PC-9 (cell line): ENCODE measurements at regions of chr10 and their contacts with region 1.

Region 1: DNA sequence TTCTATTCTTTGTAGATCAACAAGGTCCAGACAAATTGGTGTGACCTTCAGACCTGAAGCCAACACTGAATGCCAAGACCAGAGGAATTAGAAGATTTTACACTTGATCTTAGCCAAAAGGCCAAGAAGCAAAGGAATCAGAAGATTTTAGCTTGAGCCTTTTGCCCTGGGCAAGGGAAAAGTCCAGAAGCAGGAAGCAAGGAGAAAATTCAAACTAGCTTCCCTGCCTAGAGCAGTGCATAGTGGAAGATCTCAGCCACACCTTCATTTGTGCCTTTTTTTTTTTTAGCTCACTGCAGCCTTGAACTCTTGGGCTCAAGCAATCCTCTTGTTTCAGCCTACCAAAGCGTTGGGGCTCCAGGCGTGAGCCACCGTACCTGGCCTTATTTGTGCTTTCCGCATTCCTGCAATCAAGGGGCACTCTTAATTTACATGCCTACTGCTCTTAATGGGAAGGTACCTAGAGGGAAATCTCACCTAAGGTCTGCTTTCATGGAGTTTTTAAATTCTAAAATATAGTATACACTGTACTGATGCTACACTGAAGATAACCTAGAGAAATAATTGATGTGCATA is 8.3 kb upstream of the PIP4K2A start:
- DNase-seq: no peak
- H3K4me3 ChIP-seq: no peak overlapping the region
- H3K27ac ChIP-seq: no peak overlapping the region
- H3K4me1 ChIP-seq: no peaks in the 10 kb centered on the region
- H3K27me3 ChIP-seq: no peaks in the 10 kb centered on the region
- CTCF ChIP-seq: no peak

Region 2: DNA sequence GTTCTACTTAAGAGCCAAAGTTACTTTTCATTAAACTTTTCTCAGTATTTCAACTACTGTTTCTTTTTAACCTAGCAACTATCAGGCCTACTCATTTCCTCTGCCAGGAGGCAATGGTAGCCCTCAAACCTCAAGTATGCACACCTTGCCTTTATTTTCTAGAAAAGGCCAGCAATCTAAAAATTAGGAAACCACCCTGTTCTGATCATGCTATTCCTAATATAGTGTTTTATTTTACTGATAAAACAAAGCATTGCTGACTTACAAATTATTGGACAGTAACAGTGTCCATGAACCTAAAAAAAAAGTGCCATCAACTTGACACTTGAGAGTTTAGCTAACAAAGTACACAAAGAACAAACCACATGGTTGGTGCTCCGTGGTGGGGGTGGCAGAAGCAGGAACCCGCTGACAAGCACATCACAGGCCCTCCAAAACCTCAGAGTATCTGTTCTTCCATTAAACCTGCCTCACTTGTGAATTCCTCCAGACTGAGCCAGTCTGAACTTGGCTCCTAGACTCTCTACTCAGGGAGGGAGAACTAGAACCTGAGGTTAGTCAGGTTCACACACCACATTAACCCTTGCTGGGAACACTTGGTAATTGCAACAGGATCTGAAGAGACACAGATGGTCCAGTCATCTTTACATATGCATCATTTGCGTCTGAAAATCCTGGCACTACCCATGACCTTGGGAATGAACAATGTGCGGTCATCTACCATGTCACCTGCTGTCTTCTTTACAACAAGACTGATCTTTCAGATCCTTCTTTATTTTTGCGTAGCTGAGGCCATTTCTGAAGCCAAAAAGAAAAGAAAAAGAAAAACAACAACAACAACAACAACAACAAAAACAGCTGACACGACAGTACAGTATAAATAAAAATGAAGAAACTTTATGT is 40.2 kb before region 1 on chr10:
- CTCF ChIA-PET with region 1: no interaction called
- POLR2A ChIA-PET with region 1: no interaction called
- intact Hi-C with region 1: no loop called
- DNase-seq: peak; percentile 34 to 55
- H3K4me3 ChIP-seq: peak overlapping the region; percentile 21; the same call in 1 of the 2 replicates
- H3K27ac ChIP-seq: peak overlapping the region; percentile 78
- H3K4me1 ChIP-seq: peaks cover 49% of the 10 kb centered on the region
- H3K27me3 ChIP-seq: no peaks in the 10 kb centered on the region
- CTCF ChIP-seq: no peak

Region 3: GRCh38 chr10:22962817-22963216 is 240.1 kb after region 1 on chr10:
- CTCF ChIA-PET with region 1: no interaction called
- POLR2A ChIA-PET with region 1: interaction called, 10 read pairs
- intact Hi-C with region 1: no loop called
- DNase-seq: no peak
- H3K4me3 ChIP-seq: no peak overlapping the region
- H3K27ac ChIP-seq: no peak overlapping the region
- H3K4me1 ChIP-seq: no peaks in the 10 kb centered on the region
- H3K27me3 ChIP-seq: no peaks in the 10 kb centered on the region
- CTCF ChIP-seq: no peak